IMR-90 (cell line): ENCODE measurements at regions of chr7 and their contacts with region 1.

Region 1: GRCh38 chr7:54985405-54986330 is 33.1 kb upstream of the EGFR start:
- DNase-seq: peak; percentile 92
- ATAC-seq: peak; percentile 99
- H3K4me3 ChIP-seq: no peak overlapping the region
- H3K27ac ChIP-seq: peak overlapping the region; percentile 74
- H3K4me1 ChIP-seq: peaks cover 3% of the 10 kb centered on the region
- H3K27me3 ChIP-seq: no peaks in the 10 kb centered on the region
- CTCF ChIP-seq: no peak
- POLR2A ChIP-seq: no peak
- RAD21 ChIP-seq: no peak

Region 2: DNA sequence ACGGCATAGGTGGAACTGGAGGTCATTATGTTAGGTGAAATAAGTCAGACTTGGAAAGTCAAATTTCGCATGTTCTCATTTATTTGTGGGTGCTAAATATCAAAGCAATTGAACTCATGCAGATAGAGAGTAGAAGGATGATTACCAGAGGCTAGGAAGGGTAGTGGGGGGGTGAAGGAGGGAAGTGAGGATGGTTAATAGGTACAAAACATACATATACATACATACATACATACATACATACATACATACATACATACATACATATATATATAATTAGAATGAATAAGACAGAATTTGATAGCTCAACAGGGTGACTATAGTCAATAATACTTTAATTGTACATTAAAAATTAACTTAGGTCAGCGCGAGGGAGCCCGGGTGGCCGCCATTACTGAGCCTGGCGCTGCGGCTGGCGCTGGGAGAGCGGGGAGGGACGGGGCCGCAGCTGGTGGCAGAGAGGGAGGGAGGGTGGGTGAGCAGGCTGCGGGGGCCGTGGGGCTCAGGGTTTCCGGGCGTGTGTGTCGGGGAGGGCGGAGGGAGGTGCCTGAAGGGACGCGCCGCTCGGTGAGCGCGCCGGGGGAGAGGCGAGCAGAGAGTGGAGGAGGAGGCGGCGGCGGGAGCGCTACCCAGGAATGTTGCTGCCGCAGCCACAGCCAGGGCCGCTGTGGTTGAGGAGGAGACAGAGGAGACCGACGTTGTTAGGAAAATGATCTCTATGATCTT is 52.7 kb before region 1 on chr7:
- CTCF ChIA-PET with region 1: no interaction called
- POLR2A ChIA-PET with region 1: no interaction called
- dilution Hi-C with region 1: no loop called
- in situ Hi-C with region 1: no loop called
- intact Hi-C with region 1: loop called (anchors 5 kb)
- DNase-seq: peak; percentile 66
- ATAC-seq: peak; percentile 100
- H3K4me3 ChIP-seq: peak overlapping the region; percentile 42
- H3K27ac ChIP-seq: peak overlapping the region; percentile 75
- H3K4me1 ChIP-seq: peaks cover 2% of the 10 kb centered on the region; the same call in 1 of the 2 replicates
- H3K27me3 ChIP-seq: no peaks in the 10 kb centered on the region
- CTCF ChIP-seq: no peak
- POLR2A ChIP-seq: no peak
- RAD21 ChIP-seq: no peak

Region 3: GRCh38 chr7:55053651-55054571 is 68.2 kb after region 1 on chr7:
- CTCF ChIA-PET with region 1: no interaction called
- POLR2A ChIA-PET with region 1: no interaction called
- dilution Hi-C with region 1: no loop called
- in situ Hi-C with region 1: no loop called
- intact Hi-C with region 1: no loop called
- DNase-seq: peak; percentile 50
- ATAC-seq: no peak
- H3K4me3 ChIP-seq: no peak overlapping the region
- H3K27ac ChIP-seq: peak overlapping the region; percentile 44
- H3K4me1 ChIP-seq: peaks cover 46% of the 10 kb centered on the region
- H3K27me3 ChIP-seq: no peaks in the 10 kb centered on the region
- CTCF ChIP-seq: no peak
- POLR2A ChIP-seq: no peak
- RAD21 ChIP-seq: no peak